Left cardiac atrium (tissue), 4 donors: ENCODE measurements at regions of chr17 and their contacts with region 1.

Region 1: DNA sequence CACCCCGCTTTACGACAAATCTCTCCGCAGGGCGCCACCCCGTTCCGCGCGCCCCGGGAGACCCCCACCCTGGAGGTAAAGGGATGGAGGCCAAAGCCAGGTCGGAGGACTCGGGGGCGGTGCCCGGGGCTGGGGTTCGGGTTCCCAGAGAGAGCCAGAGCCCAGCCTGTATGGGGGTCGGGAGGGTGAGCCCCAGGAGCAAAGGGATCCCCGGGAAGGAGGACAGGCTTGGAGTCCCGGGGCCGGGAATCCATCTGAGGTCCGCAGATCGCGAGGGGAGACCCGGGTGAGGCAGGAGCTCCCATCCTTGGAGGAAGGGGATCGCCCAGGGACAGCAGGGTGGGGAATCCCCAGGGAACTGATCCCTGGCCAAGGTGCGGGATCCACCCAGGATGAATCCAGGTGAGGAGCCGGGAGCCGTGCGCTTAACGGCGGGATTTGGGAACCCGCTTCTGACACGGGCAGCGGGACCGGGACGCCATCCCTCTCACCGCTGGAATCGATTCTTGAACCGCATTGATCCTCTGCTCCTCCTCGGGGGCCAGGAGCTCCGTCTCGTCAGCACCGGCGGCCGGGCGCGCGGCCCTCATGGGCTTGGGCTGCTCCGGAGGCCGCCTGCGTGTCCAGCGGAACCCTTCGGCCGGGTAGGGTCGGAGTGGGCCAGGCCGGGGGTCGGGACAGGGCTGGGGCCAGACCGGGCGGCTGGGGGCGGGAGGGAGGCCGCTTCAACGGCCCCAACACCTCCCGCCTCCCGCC is at the start of gene MMD:
- DNase-seq: no peak
- ATAC-seq: peak; percentile 3 to 34
- total RNA-seq, gene MMD: 26.8 to 29.1 TPM

Region 2: GRCh38 chr17:55117164-55117563 is 304.2 kb before region 1 on chr17:
- intact Hi-C with region 1: no loop called
- DNase-seq: no peak
- ATAC-seq: no peak

Region 3: GRCh38 chr17:55513885-55514591 is 92.7 kb after region 1 on chr17:
- intact Hi-C with region 1: loop called in 1 of 2 experiments (anchors 5 kb)
- DNase-seq: peak; percentile 69
- ATAC-seq: peak; percentile 57 to 67